Heart right ventricle (tissue), 16 donors: ENCODE measurements at regions of chr3 and their contacts with region 1.

Region 1: GRCh38 chr3:30437171-30437601 is 169.2 kb upstream of the TGFBR2 start:
- DNase-seq: peak in 1 of 2 donors; percentile 32
- ATAC-seq: peak; percentile 53 to 81 (median 70)
- H3K4me3 ChIP-seq: no peak overlapping the region
- H3K27ac ChIP-seq: peak overlapping the region in 9 of 10 donors; percentile 12 to 70 (median 34)
- H3K4me1 ChIP-seq: peaks cover 0 to 51% (median 38%) of the 10 kb centered on the region in 9 donors
- H3K27me3 ChIP-seq: no peaks in the 10 kb centered on the region
- CTCF ChIP-seq: no peak

Region 2: GRCh38 chr3:29889215-29889614 is 548.0 kb before region 1 on chr3:
- intact Hi-C with region 1: no loop called
- DNase-seq: no peak
- ATAC-seq: no peak
- H3K4me3 ChIP-seq: no peak overlapping the region
- H3K27ac ChIP-seq: no peak overlapping the region
- H3K4me1 ChIP-seq: no peaks in the 10 kb centered on the region
- H3K27me3 ChIP-seq: no peaks in the 10 kb centered on the region
- CTCF ChIP-seq: no peak

Region 3: DNA sequence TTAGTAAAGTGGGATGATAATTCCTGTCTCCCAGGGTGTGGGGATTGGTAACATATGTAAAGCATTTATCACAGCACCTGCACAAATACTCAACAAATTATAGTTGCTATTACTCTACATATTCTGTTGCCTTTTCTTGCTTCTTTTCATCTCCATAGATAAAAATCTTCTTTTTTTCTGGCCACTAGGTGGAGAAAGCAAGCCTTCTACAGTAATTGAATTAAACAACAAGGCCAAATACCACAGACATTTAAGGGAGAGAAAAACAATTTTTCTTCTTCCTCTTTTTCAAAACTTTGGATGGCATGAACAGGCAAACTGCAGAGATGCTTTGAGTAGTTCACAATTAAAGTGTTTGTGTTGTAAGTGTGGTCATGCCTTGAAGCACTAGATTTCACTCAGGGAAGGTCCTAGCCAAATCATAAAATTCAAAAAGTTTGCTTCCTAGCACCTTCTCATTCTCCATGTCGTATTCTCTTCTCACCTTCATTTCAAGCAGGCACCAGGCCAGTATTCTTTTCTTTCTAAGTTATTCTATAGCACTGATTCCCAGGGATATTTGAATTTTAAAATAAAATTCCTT is 324.2 kb before region 1 on chr3:
- intact Hi-C with region 1: loop called in 1 of 10 experiments (anchors 10 kb)
- DNase-seq: no peak
- ATAC-seq: peak in 5 of 8 donors; percentile 12 to 55 (median 44)
- H3K4me3 ChIP-seq: no peak overlapping the region
- H3K27ac ChIP-seq: no peak overlapping the region
- H3K4me1 ChIP-seq: peaks cover 0 to 20% (median 8%) of the 10 kb centered on the region in 9 donors
- H3K27me3 ChIP-seq: no peaks in the 10 kb centered on the region
- CTCF ChIP-seq: peak; percentile 42 to 81 (median 71)

Region 4: GRCh38 chr3:30227571-30228301 is 209.4 kb before region 1 on chr3:
- intact Hi-C with region 1: loop called in 1 of 10 experiments (anchors 10 kb)
- DNase-seq: peak in 1 of 2 donors; percentile 12
- ATAC-seq: peak; percentile 19 to 79 (median 64)
- H3K4me3 ChIP-seq: no peak overlapping the region
- H3K27ac ChIP-seq: peak overlapping the region in 9 of 10 donors; percentile 5 to 68 (median 51)
- H3K4me1 ChIP-seq: peaks cover 6 to 60% (median 44%) of the 10 kb centered on the region in 9 donors
- H3K27me3 ChIP-seq: no peaks in the 10 kb centered on the region
- CTCF ChIP-seq: no peak

Region 5: GRCh38 chr3:30353711-30354467 is 83.3 kb before region 1 on chr3:
- intact Hi-C with region 1: loop called in 2 of 10 experiments (anchors 5 kb)
- DNase-seq: no peak
- ATAC-seq: peak; percentile 40 to 88 (median 76)
- H3K4me3 ChIP-seq: no peak overlapping the region
- H3K27ac ChIP-seq: peak overlapping the region in 9 of 10 donors; percentile 59 to 82 (median 75)
- H3K4me1 ChIP-seq: peaks cover 5 to 63% (median 55%) of the 10 kb centered on the region in 9 donors
- H3K27me3 ChIP-seq: no peaks in the 10 kb centered on the region
- CTCF ChIP-seq: no peak

Region 6: GRCh38 chr3:30496066-30496966 is 59.1 kb after region 1 on chr3:
- intact Hi-C with region 1: loop called in 1 of 10 experiments (anchors 5 kb)
- DNase-seq: no peak
- ATAC-seq: peak; percentile 37 to 85 (median 51)
- H3K4me3 ChIP-seq: no peak overlapping the region
- H3K27ac ChIP-seq: peak overlapping the region; percentile 34 to 83 (median 66)
- H3K4me1 ChIP-seq: peaks cover 2 to 61% (median 28%) of the 10 kb centered on the region in 9 donors
- H3K27me3 ChIP-seq: no peaks in the 10 kb centered on the region
- CTCF ChIP-seq: no peak

Region 7: GRCh38 chr3:30518181-30518864 is 81.1 kb after region 1 on chr3:
- intact Hi-C with region 1: loop called in 1 of 10 experiments (anchors 5 kb)
- DNase-seq: peak in 1 of 2 donors; percentile 56
- ATAC-seq: peak; percentile 72 to 96 (median 90)
- H3K4me3 ChIP-seq: no peak overlapping the region
- H3K27ac ChIP-seq: peak overlapping the region; percentile 19 to 81 (median 68)
- H3K4me1 ChIP-seq: peaks cover 0 to 54% (median 37%) of the 10 kb centered on the region in 9 donors
- H3K27me3 ChIP-seq: no peaks in the 10 kb centered on the region
- CTCF ChIP-seq: peak in 6 of 9 donors; percentile 9 to 48 (median 21)

Region 8: GRCh38 chr3:30681643-30682211 is 244.5 kb after region 1 on chr3:
- intact Hi-C with region 1: loop called in 2 of 10 experiments (anchors 2 to 10 kb)
- DNase-seq: peak; percentile 57 to 64
- ATAC-seq: peak; percentile 55 to 75 (median 66)
- H3K4me3 ChIP-seq: peak overlapping the region in 1 of 10 donors; percentile 20
- H3K27ac ChIP-seq: peak overlapping the region; percentile 51 to 83 (median 67)
- H3K4me1 ChIP-seq: peaks cover 17 to 97% (median 89%) of the 10 kb centered on the region in 9 donors
- H3K27me3 ChIP-seq: no peaks in the 10 kb centered on the region
- CTCF ChIP-seq: no peak